ENCODE measurements at regions of chr7 and their contacts with region 1.

Region 1: GRCh38 chr7:131007394-131008330 is 273.7 kb upstream of the KLF14 start:
- DNase-seq: peak; percentile 76
- H3K4me3 Mint-ChIP-seq: peak overlapping the region; percentile 55
- H3K27ac Mint-ChIP-seq: peak overlapping the region; percentile 98
- H3K4me1 Mint-ChIP-seq: peaks cover 88% of the 10 kb centered on the region
- H3K27me3 Mint-ChIP-seq: no peaks in the 10 kb centered on the region

Region 2: GRCh38 chr7:130951303-130951975 is 56.2 kb before region 1 on chr7:
- CTCF ChIA-PET with region 1: interaction called, 3 read pairs
- POLR2A ChIA-PET with region 1: interaction called, 97 read pairs
- intact Hi-C with region 1: loop called (anchors 2 kb)
- DNase-seq: peak; percentile 56
- H3K4me3 Mint-ChIP-seq: no peak overlapping the region
- H3K27ac Mint-ChIP-seq: no peak overlapping the region
- H3K4me1 Mint-ChIP-seq: peaks cover 55% of the 10 kb centered on the region
- H3K27me3 Mint-ChIP-seq: no peaks in the 10 kb centered on the region

Region 3: GRCh38 chr7:130982160-130982638 is 25.5 kb before region 1 on chr7:
- CTCF ChIA-PET with region 1: interaction called, 76 read pairs
- POLR2A ChIA-PET with region 1: interaction called, 14 read pairs
- intact Hi-C with region 1: loop called (anchors 1 kb)
- DNase-seq: peak; percentile 48
- H3K4me3 Mint-ChIP-seq: no peak overlapping the region
- H3K27ac Mint-ChIP-seq: no peak overlapping the region
- H3K4me1 Mint-ChIP-seq: peaks cover 59% of the 10 kb centered on the region
- H3K27me3 Mint-ChIP-seq: no peaks in the 10 kb centered on the region

Region 4: DNA sequence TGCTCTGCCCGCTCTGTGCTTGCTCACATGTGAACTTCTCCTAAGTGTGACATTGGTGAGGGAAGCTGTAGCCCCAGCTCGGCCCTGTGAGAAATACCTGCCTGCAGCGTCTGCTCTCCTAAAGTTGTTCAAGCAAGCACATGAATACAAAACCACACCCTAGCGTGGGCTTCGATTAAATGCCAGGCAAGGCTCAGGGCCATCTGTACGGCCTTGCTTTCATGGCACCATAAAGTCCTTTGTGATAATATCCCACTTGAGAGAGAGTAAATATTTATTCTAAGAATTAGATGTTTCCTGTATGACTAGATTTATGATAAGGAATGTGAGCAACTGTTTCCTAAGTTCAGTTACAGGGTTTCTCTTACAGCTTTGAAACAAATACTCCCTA is 10.8 kb before region 1 on chr7:
- CTCF ChIA-PET with region 1: interaction called, 33 read pairs
- POLR2A ChIA-PET with region 1: interaction called, 42 read pairs
- intact Hi-C with region 1: loop called (anchors 1 kb)
- DNase-seq: peak; percentile 73
- H3K4me3 Mint-ChIP-seq: peak overlapping the region; percentile 55
- H3K27ac Mint-ChIP-seq: peak overlapping the region; percentile 94
- H3K4me1 Mint-ChIP-seq: peaks cover 90% of the 10 kb centered on the region
- H3K27me3 Mint-ChIP-seq: no peaks in the 10 kb centered on the region

Region 5: GRCh38 chr7:131027287-131027773 is 19.7 kb after region 1 on chr7:
- CTCF ChIA-PET with region 1: interaction called, 3 read pairs
- POLR2A ChIA-PET with region 1: interaction called, 25 read pairs
- intact Hi-C with region 1: loop called (anchors 1 kb)
- DNase-seq: peak; percentile 66
- H3K4me3 Mint-ChIP-seq: peak overlapping the region; percentile 36
- H3K27ac Mint-ChIP-seq: peak overlapping the region; percentile 79
- H3K4me1 Mint-ChIP-seq: peaks cover 87% of the 10 kb centered on the region
- H3K27me3 Mint-ChIP-seq: no peaks in the 10 kb centered on the region

Region 6: GRCh38 chr7:131107337-131108211 is 99.9 kb after region 1 on chr7:
- CTCF ChIA-PET with region 1: no interaction called
- POLR2A ChIA-PET with region 1: interaction called, 5 read pairs
- intact Hi-C with region 1: loop called (anchors 2 kb)
- DNase-seq: peak; percentile 83
- H3K4me3 Mint-ChIP-seq: peak overlapping the region; percentile 94
- H3K27ac Mint-ChIP-seq: peak overlapping the region; percentile 97
- H3K4me1 Mint-ChIP-seq: peaks cover 53% of the 10 kb centered on the region
- H3K27me3 Mint-ChIP-seq: no peaks in the 10 kb centered on the region